Esophagus squamous epithelium (tissue), 5 donors: ENCODE measurements at regions of chr5 and their contacts with region 1.

Region 1: DNA sequence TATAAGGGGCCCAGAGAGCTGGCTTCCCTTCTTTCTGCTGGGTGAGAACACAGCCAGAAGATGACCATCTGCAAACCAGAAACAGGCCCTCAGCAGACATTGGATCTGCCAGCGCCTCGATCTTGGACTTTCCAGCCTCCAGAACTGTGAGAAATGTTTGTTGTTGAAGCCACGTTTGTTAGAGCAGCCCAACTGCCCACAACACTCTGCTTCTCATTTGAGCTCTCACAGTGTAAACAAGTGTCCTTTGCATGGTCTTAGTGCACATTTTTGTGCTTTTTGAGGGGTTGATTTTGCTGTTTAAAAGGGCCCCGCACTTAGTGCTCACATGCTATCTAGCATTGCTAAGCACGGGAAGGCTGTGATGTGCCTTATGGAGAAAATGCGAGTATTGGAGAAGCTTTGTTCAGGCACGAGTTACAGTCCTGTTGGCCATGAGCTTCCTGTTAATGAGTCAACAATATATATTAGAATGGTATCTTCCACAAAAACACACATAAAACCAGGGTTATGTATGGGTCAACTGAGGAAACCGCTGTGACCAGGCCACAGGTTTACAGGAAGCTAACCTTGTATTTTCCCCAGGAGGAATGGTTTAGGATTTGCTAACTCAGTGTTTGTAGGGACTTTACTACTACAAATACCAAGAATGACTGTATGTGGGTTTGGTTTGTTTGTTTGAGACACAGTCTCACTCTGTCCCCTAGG is 11.9 kb downstream of the CMBL start:
- DNase-seq: no peak
- H3K4me3 ChIP-seq: no peak overlapping the region
- H3K27ac ChIP-seq: no peak overlapping the region
- H3K4me1 ChIP-seq: no peaks in the 10 kb centered on the region
- H3K27me3 ChIP-seq: no peaks in the 10 kb centered on the region
- CTCF ChIP-seq: no peak
- POLR2A ChIP-seq: no peak

Region 2: GRCh38 chr5:10424124-10424731 is 128.5 kb after region 1 on chr5:
- intact Hi-C with region 1: loop called (anchors 10 kb)
- DNase-seq: no peak
- H3K4me3 ChIP-seq: no peak overlapping the region
- H3K27ac ChIP-seq: no peak overlapping the region
- H3K4me1 ChIP-seq: peaks cover 0 to 14% (median 0%) of the 10 kb centered on the region in 3 donors
- H3K27me3 ChIP-seq: no peaks in the 10 kb centered on the region
- CTCF ChIP-seq: peak in 3 of 6 experiments; percentile 22 to 31 (median 24)
- POLR2A ChIP-seq: no peak

Region 3: DNA sequence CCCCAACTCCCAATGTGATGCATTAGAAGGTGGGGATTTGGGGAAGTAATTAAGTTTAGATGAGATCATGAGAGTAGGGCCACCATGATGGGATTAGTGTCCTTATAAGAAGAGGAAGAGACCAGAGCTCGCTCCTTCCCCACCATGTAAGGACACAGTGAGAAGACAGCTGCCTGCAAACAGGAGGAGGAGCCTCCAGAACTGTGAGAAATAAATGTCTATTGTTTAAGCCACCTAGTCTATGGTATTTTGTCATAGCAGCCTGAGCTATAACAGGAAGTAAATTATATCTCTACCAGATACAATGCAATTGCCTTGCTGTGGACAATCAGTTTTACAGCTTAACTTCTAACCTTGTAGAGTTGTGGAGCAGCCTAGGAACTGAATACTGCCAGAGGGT is 326.1 kb after region 1 on chr5:
- intact Hi-C with region 1: no loop called
- DNase-seq: no peak
- H3K4me3 ChIP-seq: no peak overlapping the region
- H3K27ac ChIP-seq: no peak overlapping the region
- H3K4me1 ChIP-seq: peaks cover 0 to 14% (median 0%) of the 10 kb centered on the region in 3 donors
- H3K27me3 ChIP-seq: no peaks in the 10 kb centered on the region
- CTCF ChIP-seq: no peak
- POLR2A ChIP-seq: no peak

Region 4: GRCh38 chr5:11062397-11062796 is 766.6 kb after region 1 on chr5:
- intact Hi-C with region 1: no loop called
- DNase-seq: no peak
- H3K4me3 ChIP-seq: no peak overlapping the region
- H3K27ac ChIP-seq: no peak overlapping the region
- H3K4me1 ChIP-seq: no peaks in the 10 kb centered on the region
- H3K27me3 ChIP-seq: peaks cover 0 to 21% (median 0%) of the 10 kb centered on the region in 4 donors
- CTCF ChIP-seq: no peak
- POLR2A ChIP-seq: no peak